Colonic mucosa (tissue), 4 donors: ENCODE measurements at regions of chr12 and their contacts with region 1.

Region 1: GRCh38 chr12:13941258-13942249 is 39.8 kb downstream of the GRIN2B start:
- DNase-seq: peak; percentile 84
- H3K4me3 ChIP-seq: no peak overlapping the region
- H3K27ac ChIP-seq: no peak overlapping the region
- H3K4me1 ChIP-seq: no peaks in the 10 kb centered on the region
- H3K27me3 ChIP-seq: no peaks in the 10 kb centered on the region
- CTCF ChIP-seq: peak; percentile 20

Region 2: DNA sequence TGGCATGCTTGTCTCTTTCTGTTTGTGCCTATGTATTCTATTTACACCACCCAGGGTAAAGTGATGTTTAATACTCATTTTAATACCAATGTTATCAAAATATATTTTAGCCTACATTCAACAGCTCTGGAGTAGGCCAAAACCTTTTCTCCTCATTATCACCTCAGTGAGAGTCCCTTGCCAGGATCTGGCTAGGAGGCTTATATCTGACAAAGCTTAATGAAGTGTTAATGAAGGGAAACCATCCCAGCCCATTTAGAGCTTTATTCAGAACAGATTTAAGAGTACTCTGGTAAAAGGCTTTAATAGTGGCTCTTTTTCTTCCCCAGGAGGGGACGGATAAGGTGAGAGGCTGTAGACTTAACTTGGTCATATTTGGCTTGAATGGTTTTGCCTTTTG is 97.7 kb before region 1 on chr12:
- intact Hi-C with region 1: no loop called
- DNase-seq: no peak
- H3K4me3 ChIP-seq: no peak overlapping the region
- H3K27ac ChIP-seq: no peak overlapping the region
- H3K4me1 ChIP-seq: no peaks in the 10 kb centered on the region
- H3K27me3 ChIP-seq: no peaks in the 10 kb centered on the region
- CTCF ChIP-seq: no peak

Region 3: GRCh38 chr12:13864081-13864673 is 77.4 kb before region 1 on chr12:
- intact Hi-C with region 1: loop called (anchors 5 kb)
- DNase-seq: peak; percentile 78
- H3K4me3 ChIP-seq: no peak overlapping the region
- H3K27ac ChIP-seq: no peak overlapping the region
- H3K4me1 ChIP-seq: no peaks in the 10 kb centered on the region
- H3K27me3 ChIP-seq: no peaks in the 10 kb centered on the region
- CTCF ChIP-seq: peak; percentile 84

Region 4: DNA sequence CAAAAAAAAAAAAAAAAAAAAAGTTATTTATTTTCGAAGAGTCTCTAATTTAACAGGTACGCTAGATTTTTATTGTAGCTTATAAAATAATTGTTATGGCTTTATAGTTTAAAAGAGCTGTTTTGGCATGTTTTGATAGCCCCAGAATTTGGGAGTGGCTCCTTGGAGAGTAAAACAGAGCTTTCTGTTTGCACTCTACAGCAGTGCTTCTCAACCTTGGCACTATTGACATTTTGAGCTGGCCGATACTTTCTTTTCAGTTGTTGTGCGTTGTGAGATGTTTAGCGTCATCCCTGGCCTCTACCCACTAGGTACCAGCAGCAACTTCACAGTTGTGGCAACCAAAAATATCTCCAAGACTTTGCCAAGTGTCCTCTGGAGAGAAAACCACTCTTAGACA is 595.5 kb after region 1 on chr12:
- intact Hi-C with region 1: no loop called
- DNase-seq: no peak
- H3K4me3 ChIP-seq: no peak overlapping the region
- H3K27ac ChIP-seq: peak overlapping the region; percentile 37
- H3K4me1 ChIP-seq: peaks cover 11% of the 10 kb centered on the region
- H3K27me3 ChIP-seq: no peaks in the 10 kb centered on the region
- CTCF ChIP-seq: no peak